ENCODE measurements at regions of chr16 and their contacts with region 1.

Region 1: DNA sequence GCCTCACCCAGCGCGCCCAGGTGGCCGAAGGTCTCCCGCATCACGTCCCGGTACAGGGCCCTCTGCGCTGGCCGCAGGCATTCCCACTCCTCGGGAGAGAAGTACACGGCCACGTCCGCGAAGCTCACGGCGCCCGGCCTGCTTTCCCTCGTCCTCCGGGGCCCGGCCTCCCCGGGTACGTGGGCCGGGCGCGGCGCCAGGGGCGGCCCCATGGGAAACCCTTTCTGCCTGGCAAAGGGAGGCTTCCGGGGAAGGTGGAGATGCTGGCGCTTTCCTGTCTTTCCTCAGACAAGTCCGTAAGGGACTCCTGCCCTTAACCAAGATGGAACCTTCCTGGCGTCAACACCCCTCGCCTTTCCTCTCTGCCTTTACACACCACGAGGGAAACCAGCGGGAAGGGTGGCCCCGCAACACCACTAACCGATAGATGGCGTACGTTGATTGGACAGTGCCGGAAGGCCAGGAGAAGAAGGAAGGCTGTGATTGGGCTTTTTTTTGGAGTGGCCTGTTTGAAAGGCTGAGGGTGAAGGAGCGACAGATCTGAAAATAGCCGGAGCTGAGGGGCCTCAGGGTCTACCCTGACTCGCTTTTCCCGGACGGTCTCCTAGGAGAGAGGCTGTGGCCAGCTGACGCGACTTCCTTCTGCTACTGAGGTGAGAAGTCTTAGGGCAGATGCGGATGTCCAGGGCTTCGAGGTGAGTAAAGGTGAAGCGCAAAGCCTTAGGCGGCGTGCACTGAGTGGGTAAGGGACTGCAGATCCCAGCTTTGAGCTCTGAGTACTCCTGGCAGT is at the start of gene ZNF785:
- DNase-seq: peak; percentile 97
- ATAC-seq: peak; percentile 99
- total RNA-seq, gene ZNF785: 8.2 to 9.8 TPM

Region 2: GRCh38 chr16:30557957-30558788 is 27.4 kb before region 1 on chr16 and contains the start of gene ZNF764:
- intact Hi-C with region 1: loop called in 1 of 2 experiments (anchors 1 kb)
- DNase-seq: peak; percentile 98
- ATAC-seq: peak; percentile 97
- total RNA-seq, gene ZNF764: 5.7 to 8.7 TPM

Region 3: DNA sequence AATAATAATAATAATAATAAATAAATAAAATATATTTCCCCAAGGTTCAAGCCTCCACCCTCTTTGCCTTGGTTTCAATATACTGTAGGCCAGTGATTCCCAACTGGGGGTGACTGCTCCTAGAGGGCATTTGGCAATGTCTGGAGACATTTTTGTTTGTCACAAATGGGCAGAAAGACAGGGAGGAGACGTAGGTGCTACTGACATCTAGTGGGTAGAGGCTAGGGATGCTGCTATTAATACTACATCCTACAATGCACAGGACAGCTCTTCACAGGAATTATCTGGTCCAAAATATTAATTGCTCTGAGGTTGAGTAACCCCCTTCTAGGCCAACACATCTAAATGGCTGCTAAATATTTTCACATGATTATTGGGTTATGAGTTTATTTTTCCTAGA is 52.3 kb after region 1 on chr16:
- intact Hi-C with region 1: loop called in 1 of 2 experiments (anchors 10 kb)
- DNase-seq: no peak
- ATAC-seq: no peak

Region 4: DNA sequence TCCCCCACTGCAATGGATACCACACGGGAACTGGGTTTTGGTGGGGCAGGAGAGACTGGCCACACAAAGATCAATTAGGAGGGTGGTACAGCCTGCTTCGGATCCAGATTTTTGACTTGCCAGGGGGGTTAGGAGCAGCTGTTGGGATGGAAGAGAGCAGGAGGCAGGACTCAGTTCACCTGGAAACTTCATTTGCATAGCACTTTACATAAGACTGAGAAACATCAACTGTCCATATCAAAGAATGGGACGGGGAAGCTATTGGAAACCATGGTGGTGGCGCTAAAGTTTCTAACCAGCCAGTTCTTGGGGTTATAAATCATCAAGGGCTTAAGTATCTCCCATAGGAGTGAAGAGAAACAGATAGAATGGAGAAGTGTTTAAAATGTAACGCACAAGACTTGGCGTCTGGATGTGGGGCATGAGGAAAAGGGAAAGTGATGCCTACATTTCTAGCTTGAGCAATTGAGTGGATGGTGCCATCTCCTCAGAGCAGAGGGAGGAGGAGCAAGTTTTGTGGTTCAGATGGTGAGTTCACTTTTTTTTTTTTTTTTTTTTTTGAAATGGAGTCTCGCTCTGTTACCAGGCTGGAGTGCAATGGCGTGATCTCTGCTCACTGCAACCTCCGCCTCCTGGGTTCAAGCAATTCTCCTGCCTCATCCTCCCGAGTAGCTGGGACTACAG is 106.9 kb after region 1 on chr16:
- intact Hi-C with region 1: no loop called
- DNase-seq: no peak
- ATAC-seq: no peak